A673 (cell line): ENCODE measurements at regions of chr6 and their contacts with region 1.

Region 1: GRCh38 chr6:55445648-55446204 is 118.5 kb downstream of the GFRAL start:
- DNase-seq: peak; percentile 56
- H3K4me3 ChIP-seq: no peak overlapping the region
- H3K27ac ChIP-seq: no peak overlapping the region
- H3K4me1 ChIP-seq: no peaks in the 10 kb centered on the region
- H3K27me3 ChIP-seq: no peaks in the 10 kb centered on the region
- CTCF ChIP-seq: peak; percentile 71

Region 2: GRCh38 chr6:55282115-55282514 is 163.6 kb before region 1 on chr6:
- CTCF ChIA-PET with region 1: interaction called, 6 read pairs
- POLR2A ChIA-PET with region 1: no interaction called
- intact Hi-C with region 1: loop called (anchors 5 kb)
- DNase-seq: no peak
- H3K4me3 ChIP-seq: no peak overlapping the region
- H3K27ac ChIP-seq: no peak overlapping the region
- H3K4me1 ChIP-seq: no peaks in the 10 kb centered on the region
- H3K27me3 ChIP-seq: no peaks in the 10 kb centered on the region
- CTCF ChIP-seq: no peak

Region 3: DNA sequence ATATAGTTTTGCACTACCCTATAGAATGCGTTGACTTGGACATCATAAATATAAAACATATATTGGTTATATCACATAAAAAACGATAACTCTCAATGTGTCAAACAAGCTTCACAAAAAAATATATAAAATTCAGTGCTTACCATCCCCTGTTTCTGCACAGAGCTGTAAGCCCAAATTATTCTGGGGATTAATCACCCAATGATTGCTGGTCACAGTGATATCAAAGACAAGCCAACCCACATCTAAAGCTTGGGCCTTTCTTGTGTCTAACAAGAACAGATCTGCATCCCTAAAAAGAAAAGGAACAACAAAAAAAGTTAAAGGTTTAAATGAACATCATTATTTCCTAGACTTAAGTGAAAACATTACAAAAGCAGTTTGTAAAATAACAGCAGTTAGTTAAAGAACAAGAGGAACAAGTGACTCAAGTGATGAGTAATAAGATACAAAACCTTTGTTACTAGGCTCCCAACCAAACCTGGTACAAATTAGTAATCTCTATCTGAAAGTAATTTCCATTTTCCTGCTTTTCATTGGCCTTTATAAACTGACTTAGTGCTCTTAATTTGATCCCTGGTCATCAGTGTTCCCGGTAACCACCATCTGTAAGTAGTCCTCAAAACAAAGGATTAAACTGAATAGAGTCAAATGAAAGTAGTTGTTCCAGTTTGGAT is 348.5 kb after region 1 on chr6:
- CTCF ChIA-PET with region 1: interaction called, 10 read pairs
- POLR2A ChIA-PET with region 1: no interaction called
- intact Hi-C with region 1: no loop called
- DNase-seq: no peak
- H3K4me3 ChIP-seq: no peak overlapping the region
- H3K27ac ChIP-seq: no peak overlapping the region
- H3K4me1 ChIP-seq: no peaks in the 10 kb centered on the region
- H3K27me3 ChIP-seq: no peaks in the 10 kb centered on the region
- CTCF ChIP-seq: no peak

Region 4: GRCh38 chr6:55886185-55886836 is 440.6 kb after region 1 on chr6:
- CTCF ChIA-PET with region 1: no interaction called
- POLR2A ChIA-PET with region 1: no interaction called
- intact Hi-C with region 1: loop called (anchors 5 kb)
- DNase-seq: peak; percentile 39
- H3K4me3 ChIP-seq: no peak overlapping the region
- H3K27ac ChIP-seq: no peak overlapping the region
- H3K4me1 ChIP-seq: peaks cover 14% of the 10 kb centered on the region
- H3K27me3 ChIP-seq: no peaks in the 10 kb centered on the region
- CTCF ChIP-seq: peak; percentile 66

Region 5: DNA sequence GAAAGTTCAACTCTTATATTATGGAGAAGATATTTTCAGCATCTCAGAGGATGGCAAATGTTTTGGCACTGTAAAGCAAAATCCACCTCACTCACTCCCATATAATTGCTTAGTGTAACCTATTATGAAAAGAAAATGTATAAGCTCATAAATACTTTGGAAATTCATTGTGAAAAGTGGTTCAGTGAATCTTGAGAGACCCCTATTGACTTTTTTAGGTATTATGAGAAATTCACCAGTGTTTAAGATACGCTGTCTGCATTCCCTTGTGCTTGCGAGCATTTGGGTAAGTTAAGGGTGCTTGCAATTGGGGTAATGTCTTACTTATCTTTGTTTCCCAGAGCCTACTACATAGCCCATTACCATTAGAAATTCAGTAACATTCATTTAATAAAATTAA is 496.0 kb after region 1 on chr6:
- CTCF ChIA-PET with region 1: no interaction called
- POLR2A ChIA-PET with region 1: no interaction called
- intact Hi-C with region 1: loop called (anchors 5 kb)
- DNase-seq: peak; percentile 40
- H3K4me3 ChIP-seq: no peak overlapping the region
- H3K27ac ChIP-seq: no peak overlapping the region
- H3K4me1 ChIP-seq: no peaks in the 10 kb centered on the region
- H3K27me3 ChIP-seq: no peaks in the 10 kb centered on the region
- CTCF ChIP-seq: peak; percentile 51; the same call in 1 of the 2 replicates